Caco-2 (cell line): ENCODE measurements at regions of chr2 and their contacts with region 1.

Region 1: DNA sequence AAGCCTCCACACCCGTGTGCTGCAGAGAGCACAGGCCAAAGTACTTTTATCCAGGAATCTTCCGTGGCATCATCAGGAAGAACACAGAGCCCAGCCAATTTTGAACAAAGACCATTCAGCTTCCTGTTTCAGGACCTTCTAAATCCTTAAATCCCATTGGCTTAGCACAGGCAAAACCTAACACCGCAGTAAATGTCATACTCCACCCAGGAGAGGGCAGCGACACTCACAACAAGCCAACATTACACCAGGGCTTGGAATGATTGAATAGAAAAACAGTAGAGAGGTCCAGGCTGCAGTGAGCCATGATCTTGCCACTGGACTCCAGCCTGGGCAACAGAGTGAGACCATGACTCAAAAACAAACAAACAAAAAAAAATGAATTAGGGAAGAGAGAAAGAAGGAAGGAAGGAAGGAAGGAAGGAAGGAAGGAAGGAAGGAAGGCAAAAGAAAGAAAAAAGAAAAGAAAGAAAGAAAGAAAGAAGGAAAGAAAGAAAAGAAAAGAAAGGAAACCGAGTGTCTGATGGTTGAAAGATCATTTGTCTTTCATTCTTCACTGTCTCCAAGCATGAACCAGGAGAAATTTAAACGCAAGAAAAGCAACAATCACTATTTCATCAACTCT is 144.6 kb upstream of the SATB2 start:
- DNase-seq: peak; percentile 49 to 58
- H3K4me3 ChIP-seq: no peak overlapping the region
- H3K4me3 Mint-ChIP-seq: no peak overlapping the region
- H3K27ac Mint-ChIP-seq: no peak overlapping the region
- H3K4me1 ChIP-seq: no peaks in the 10 kb centered on the region
- H3K4me1 Mint-ChIP-seq: peaks cover 7% of the 10 kb centered on the region
- H3K27me3 ChIP-seq: no peaks in the 10 kb centered on the region
- H3K27me3 Mint-ChIP-seq: no peaks in the 10 kb centered on the region
- CTCF ChIP-seq: peak; percentile 35 to 38

Region 2: GRCh38 chr2:199627391-199627790 is 25.0 kb after region 1 on chr2:
- CTCF ChIA-PET with region 1: no interaction called
- POLR2A ChIA-PET with region 1: no interaction called
- intact Hi-C with region 1: no loop called
- DNase-seq: no peak
- H3K4me3 ChIP-seq: no peak overlapping the region
- H3K4me3 Mint-ChIP-seq: no peak overlapping the region
- H3K27ac Mint-ChIP-seq: no peak overlapping the region
- H3K4me1 ChIP-seq: peaks cover 17% of the 10 kb centered on the region
- H3K4me1 Mint-ChIP-seq: peaks cover 25% of the 10 kb centered on the region
- H3K27me3 ChIP-seq: no peaks in the 10 kb centered on the region
- H3K27me3 Mint-ChIP-seq: no peaks in the 10 kb centered on the region
- CTCF ChIP-seq: no peak

Region 3: GRCh38 chr2:199739413-199740110 is 137.2 kb after region 1 on chr2:
- CTCF ChIA-PET with region 1: no interaction called
- POLR2A ChIA-PET with region 1: no interaction called
- intact Hi-C with region 1: loop called (anchors 1 kb)
- DNase-seq: peak; percentile 66 to 77
- H3K4me3 ChIP-seq: no peak overlapping the region
- H3K4me3 Mint-ChIP-seq: no peak overlapping the region
- H3K27ac Mint-ChIP-seq: peak overlapping the region; percentile 43
- H3K4me1 ChIP-seq: peaks cover 43% of the 10 kb centered on the region
- H3K4me1 Mint-ChIP-seq: peaks cover 23% of the 10 kb centered on the region
- H3K27me3 ChIP-seq: no peaks in the 10 kb centered on the region
- H3K27me3 Mint-ChIP-seq: peaks cover 4% of the 10 kb centered on the region
- CTCF ChIP-seq: peak; percentile 79 to 91

Region 4: DNA sequence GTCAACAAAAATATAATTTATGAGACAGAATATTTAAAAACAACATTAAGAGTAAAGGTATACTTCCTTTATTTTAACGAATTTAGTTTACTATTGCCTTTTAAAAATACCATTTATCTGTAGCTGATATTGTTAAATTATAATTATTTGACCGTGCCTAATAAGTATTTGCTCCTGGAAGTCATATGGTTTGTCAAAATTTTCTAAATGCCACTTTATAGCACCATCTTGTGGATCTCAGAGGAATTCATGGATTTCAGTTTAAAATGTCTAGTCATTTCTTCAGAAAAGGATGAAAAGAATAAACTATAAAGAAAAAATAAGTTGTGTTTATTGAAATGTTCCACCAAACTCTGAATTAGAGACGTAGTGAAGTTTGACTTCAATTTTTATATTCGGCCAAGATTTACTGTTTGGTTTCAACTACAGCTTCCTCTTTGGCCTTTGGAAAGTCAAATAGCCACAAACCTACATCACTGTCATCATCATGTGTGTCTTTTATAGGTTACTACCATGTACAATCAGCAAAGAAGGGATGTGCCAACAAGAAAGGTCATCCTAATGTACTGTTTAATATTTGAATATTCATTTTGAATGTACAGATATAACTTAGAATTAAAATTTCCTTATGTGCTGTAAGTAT is 258.9 kb after region 1 on chr2:
- CTCF ChIA-PET with region 1: no interaction called
- POLR2A ChIA-PET with region 1: no interaction called
- intact Hi-C with region 1: loop called (anchors 2 kb)
- DNase-seq: no peak
- H3K4me3 ChIP-seq: no peak overlapping the region
- H3K4me3 Mint-ChIP-seq: no peak overlapping the region
- H3K27ac Mint-ChIP-seq: no peak overlapping the region
- H3K4me1 ChIP-seq: no peaks in the 10 kb centered on the region
- H3K4me1 Mint-ChIP-seq: no peaks in the 10 kb centered on the region
- H3K27me3 ChIP-seq: no peaks in the 10 kb centered on the region
- H3K27me3 Mint-ChIP-seq: peaks cover 20% of the 10 kb centered on the region
- CTCF ChIP-seq: peak; percentile 46 to 51

Region 5: DNA sequence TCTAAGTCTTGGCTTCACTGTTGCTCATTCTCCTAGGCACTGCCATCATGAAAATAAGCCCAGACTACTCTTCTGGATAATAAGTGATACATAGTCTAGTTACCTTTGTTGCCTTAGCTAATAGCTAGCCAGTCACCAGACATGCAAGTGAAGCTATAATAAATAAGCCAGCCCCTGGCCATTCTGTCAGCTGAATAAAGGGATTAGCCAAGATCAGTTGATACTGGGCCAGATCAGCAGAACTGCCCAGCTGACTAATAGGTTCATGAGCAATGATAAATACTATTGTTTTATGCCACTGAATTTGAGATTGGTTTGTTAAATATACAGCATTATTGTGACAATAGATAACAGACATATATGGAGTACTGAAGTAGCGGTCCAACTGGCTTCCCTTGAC is 300.7 kb after region 1 on chr2:
- CTCF ChIA-PET with region 1: no interaction called
- POLR2A ChIA-PET with region 1: no interaction called
- intact Hi-C with region 1: no loop called
- DNase-seq: no peak
- H3K4me3 ChIP-seq: no peak overlapping the region
- H3K4me3 Mint-ChIP-seq: no peak overlapping the region
- H3K27ac Mint-ChIP-seq: no peak overlapping the region
- H3K4me1 ChIP-seq: no peaks in the 10 kb centered on the region
- H3K4me1 Mint-ChIP-seq: no peaks in the 10 kb centered on the region
- H3K27me3 ChIP-seq: no peaks in the 10 kb centered on the region
- H3K27me3 Mint-ChIP-seq: no peaks in the 10 kb centered on the region
- CTCF ChIP-seq: no peak